ENCODE measurements at regions of chr1 and their contacts with region 1.

Region 1: DNA sequence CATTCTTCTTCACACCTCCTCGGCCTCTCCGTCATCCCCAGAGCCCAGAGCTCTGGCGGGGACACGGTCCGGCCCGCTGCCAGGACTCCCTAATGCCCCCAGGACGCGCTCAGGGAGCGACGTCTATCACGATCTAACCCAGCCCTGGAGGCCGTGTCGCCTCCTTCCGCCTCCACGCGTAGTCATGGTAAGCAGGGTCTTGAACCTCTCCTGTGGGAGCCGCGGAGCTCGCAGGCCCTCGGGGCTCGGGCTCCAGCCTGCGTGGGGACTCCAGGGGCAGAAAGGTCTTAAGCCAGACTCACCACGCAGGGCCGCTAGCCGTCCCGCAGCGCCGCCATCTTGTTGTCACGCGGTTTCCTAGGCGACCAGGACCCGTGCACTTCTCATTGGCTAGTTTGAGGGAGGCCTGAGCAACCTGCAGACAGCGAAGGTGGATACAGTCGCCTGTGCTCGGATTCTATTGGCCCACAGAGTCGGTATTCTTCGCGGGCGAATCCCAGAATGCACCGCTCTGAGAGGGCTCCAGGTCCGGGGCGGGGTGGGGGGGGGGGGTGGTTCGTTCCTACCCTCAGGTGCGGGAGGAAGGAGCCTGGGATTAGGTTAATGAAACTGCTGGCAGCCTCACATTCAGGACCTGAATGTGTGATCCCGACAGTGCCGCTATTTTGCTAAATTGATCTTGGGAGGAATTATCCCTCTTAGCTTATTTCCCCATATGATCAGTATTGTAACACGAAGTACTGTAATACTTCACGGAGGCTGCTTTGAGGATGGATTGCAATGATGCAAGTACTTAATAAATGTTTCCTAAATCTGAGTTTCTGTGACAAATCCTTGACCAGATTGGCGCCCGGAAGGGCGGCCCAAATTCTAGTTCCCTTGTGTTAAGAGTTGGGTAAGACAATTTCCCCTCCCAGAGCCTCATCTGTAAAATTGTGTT is at the start of gene UBXN11:
- DNase-seq: peak; percentile 90 to 92
- H3K4me3 ChIP-seq: peak within 1 kb of the TSS; percentile 97
- H3K27ac ChIP-seq: peak within 1 kb of the TSS; percentile 59
- H3K4me1 ChIP-seq: peaks cover 26% of the 10 kb centered on the region
- H3K27me3 ChIP-seq: no peaks in the 10 kb centered on the region
- CTCF ChIP-seq: no peak
- total RNA-seq, gene UBXN11: 57.2 and 59.9 TPM in 2 replicates

Region 2: GRCh38 chr1:25090707-25091422 is 1215.7 kb before region 1 on chr1:
- CTCF ChIA-PET with region 1: no interaction called
- POLR2A ChIA-PET with region 1: interaction called, 27 read pairs
- intact Hi-C with region 1: no loop called
- DNase-seq: no peak
- H3K4me3 ChIP-seq: no peak overlapping the region
- H3K27ac ChIP-seq: no peak overlapping the region
- H3K4me1 ChIP-seq: no peaks in the 10 kb centered on the region
- H3K27me3 ChIP-seq: no peaks in the 10 kb centered on the region
- CTCF ChIP-seq: no peak

Region 3: GRCh38 chr1:26210147-26210870 is 96.3 kb before region 1 on chr1:
- CTCF ChIA-PET with region 1: no interaction called
- POLR2A ChIA-PET with region 1: no interaction called
- intact Hi-C with region 1: no loop called
- DNase-seq: no peak
- H3K4me3 ChIP-seq: no peak overlapping the region
- H3K27ac ChIP-seq: no peak overlapping the region
- H3K4me1 ChIP-seq: no peaks in the 10 kb centered on the region
- H3K27me3 ChIP-seq: no peaks in the 10 kb centered on the region
- CTCF ChIP-seq: no peak

Region 4: DNA sequence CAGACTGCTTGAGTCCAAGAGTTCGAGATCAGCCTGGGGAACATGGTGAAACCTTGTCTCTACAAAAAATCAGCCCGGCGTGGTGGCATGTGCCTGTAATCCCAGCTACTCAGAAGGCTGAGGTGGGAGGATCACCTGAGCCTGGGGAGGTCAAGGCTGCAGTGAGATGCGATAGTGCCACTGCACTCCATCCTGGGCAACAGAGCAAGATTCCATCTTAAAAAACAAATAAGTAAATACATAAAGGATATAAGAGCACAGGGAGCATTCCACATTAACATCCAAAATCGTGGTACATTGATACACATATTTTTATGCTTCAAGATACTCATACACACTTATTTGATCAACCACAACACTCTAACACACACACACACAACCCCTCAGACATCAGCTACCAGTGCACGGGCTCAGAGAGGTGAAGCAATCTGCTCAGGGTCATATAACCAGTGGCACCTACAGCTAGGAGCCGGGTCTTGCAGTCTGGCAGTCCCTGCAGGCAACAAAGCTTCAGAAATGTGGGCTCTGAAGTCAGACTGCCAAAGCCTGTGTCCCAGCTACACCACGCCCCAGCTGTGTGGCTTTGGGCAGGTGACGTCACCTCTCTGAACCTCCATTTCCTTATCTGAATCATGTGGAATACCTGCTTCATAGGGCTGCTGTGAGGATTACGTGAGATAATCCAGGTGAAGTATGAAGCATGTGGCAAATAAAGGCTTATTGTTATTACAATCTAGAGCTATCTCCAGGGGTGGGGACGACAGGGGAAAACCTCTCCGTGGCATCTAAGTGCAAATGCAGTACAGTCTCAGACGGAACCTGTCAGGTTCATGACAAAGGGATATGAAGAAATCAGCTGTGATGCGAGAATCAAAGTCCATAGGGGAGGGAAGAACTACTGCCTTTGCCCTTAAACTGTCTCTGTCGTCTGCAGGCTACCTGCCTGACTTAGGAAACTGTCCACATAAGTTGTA is 52.1 kb after region 1 on chr1:
- CTCF ChIA-PET with region 1: no interaction called
- POLR2A ChIA-PET with region 1: interaction called, 3 read pairs
- intact Hi-C with region 1: loop called (anchors 5 kb)
- DNase-seq: peak; percentile 88 to 97
- H3K4me3 ChIP-seq: no peak overlapping the region; the same call in 1 of the 2 replicates
- H3K27ac ChIP-seq: peak overlapping the region; percentile 84
- H3K4me1 ChIP-seq: peaks cover 54% of the 10 kb centered on the region
- H3K27me3 ChIP-seq: no peaks in the 10 kb centered on the region
- CTCF ChIP-seq: no peak

Region 5: GRCh38 chr1:26717017-26717491 is 410.5 kb after region 1 on chr1:
- CTCF ChIA-PET with region 1: no interaction called
- POLR2A ChIA-PET with region 1: no interaction called
- intact Hi-C with region 1: no loop called
- DNase-seq: no peak
- H3K4me3 ChIP-seq: no peak overlapping the region
- H3K27ac ChIP-seq: peak overlapping the region; percentile 11; the same call in 1 of the 2 replicates
- H3K4me1 ChIP-seq: peaks cover 6% of the 10 kb centered on the region; the same call in 1 of the 2 replicates
- H3K27me3 ChIP-seq: no peaks in the 10 kb centered on the region
- CTCF ChIP-seq: no peak

Measured in PC-9 (cell line).